A549 (cell line): ENCODE measurements at regions of chr1 and their contacts with region 1.

Region 1: GRCh38 chr1:171984850-171985485 is 143.7 kb downstream of the DNM3 start:
- DNase-seq: peak; percentile 24 to 32
- ATAC-seq: peak in 1 of 2 experiments; percentile 78; a peak in 3 of 6 replicates
- H3K4me3 ChIP-seq: no peak overlapping the region
- H3K27ac ChIP-seq: no peak overlapping the region
- H3K4me1 ChIP-seq: peaks cover 11% of the 10 kb centered on the region; the same call in 2 of the 3 replicates
- CTCF ChIP-seq: peak; percentile 89
- EP300 ChIP-seq: no peak
- POLR2A ChIP-seq: no peak
- RAD21 ChIP-seq: peak; percentile 82 to 84

Region 2: GRCh38 chr1:171644805-171645483 is 340.0 kb before region 1 on chr1:
- CTCF ChIA-PET with region 1: interaction called, 44 read pairs
- POLR2A ChIA-PET with region 1: no interaction called
- DNase-seq: peak; percentile 58 to 91
- ATAC-seq: peak; percentile 92 to 95
- H3K4me3 ChIP-seq: no peak overlapping the region
- H3K27ac ChIP-seq: peak overlapping the region in 1 of 2 experiments; percentile 55; a peak in 1 of 6 replicates
- H3K4me1 ChIP-seq: no peaks in the 10 kb centered on the region
- CTCF ChIP-seq: peak; percentile 79
- EP300 ChIP-seq: no peak
- POLR2A ChIP-seq: no peak
- RAD21 ChIP-seq: peak; percentile 76 to 83

Region 3: GRCh38 chr1:171801487-171801891 is 183.5 kb before region 1 on chr1:
- CTCF ChIA-PET with region 1: interaction called, 393 read pairs
- POLR2A ChIA-PET with region 1: interaction called, 4 read pairs
- DNase-seq: peak; percentile 50 to 54
- ATAC-seq: peak; percentile 75 to 77; a peak in 5 of 6 replicates
- H3K4me3 ChIP-seq: no peak overlapping the region
- H3K27ac ChIP-seq: no peak overlapping the region
- H3K4me1 ChIP-seq: no peaks in the 10 kb centered on the region
- CTCF ChIP-seq: peak; percentile 94
- EP300 ChIP-seq: no peak
- POLR2A ChIP-seq: no peak
- RAD21 ChIP-seq: peak; percentile 84 to 92

Region 4: GRCh38 chr1:171868217-171868803 is 116.7 kb before region 1 on chr1:
- CTCF ChIA-PET with region 1: no interaction called
- POLR2A ChIA-PET with region 1: no interaction called
- DNase-seq: no peak
- ATAC-seq: no peak
- H3K4me3 ChIP-seq: no peak overlapping the region
- H3K27ac ChIP-seq: no peak overlapping the region
- H3K4me1 ChIP-seq: no peaks in the 10 kb centered on the region
- CTCF ChIP-seq: no peak
- EP300 ChIP-seq: no peak
- POLR2A ChIP-seq: no peak
- RAD21 ChIP-seq: no peak

Region 5: DNA sequence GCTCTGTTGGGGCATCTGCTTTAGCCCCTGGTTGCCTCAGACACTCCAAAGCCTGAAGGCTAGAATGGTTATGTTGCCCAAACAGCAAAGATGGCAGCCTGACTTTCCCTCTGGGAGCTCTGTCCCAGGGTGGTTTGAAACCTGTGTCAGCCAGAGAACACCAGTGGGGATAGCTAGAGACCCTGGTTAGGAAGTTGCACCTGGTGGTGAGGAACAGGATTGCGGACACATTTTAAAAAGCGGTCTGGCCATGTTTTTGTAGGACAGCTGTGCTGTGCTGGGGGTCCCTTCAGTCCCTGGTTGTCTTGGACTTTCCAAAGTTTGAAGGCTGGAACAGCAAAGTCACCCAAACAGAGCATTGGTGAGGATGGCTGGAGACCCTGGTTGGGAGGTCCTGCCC is 55.8 kb before region 1 on chr1:
- CTCF ChIA-PET with region 1: no interaction called
- POLR2A ChIA-PET with region 1: no interaction called
- DNase-seq: no peak
- ATAC-seq: peak in 1 of 2 experiments; percentile 70; a peak in 3 of 6 replicates
- H3K4me3 ChIP-seq: no peak overlapping the region
- H3K27ac ChIP-seq: no peak overlapping the region
- H3K4me1 ChIP-seq: no peaks in the 10 kb centered on the region
- CTCF ChIP-seq: no peak
- EP300 ChIP-seq: no peak
- POLR2A ChIP-seq: no peak
- RAD21 ChIP-seq: no peak

Region 6: DNA sequence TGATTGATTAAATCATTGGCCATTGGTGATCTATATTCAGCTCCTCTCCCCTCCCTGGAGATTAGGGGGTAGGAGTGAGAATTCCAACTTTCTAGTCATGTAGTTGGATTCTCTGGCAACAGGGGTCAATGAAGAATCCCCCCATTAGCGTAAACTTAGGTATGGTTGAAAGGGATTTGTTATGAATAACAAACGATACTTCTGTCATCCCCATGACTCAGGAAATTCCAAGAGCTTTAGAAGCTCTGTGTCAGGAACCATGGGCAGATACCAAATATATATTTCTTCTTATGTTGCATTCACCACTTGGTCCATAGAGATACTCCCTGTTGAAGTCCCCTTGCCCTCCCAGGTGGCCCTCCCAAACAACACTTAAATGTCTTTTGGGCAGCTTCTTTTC is 19.2 kb before region 1 on chr1:
- CTCF ChIA-PET with region 1: interaction called, 32 read pairs
- POLR2A ChIA-PET with region 1: no interaction called
- DNase-seq: no peak
- ATAC-seq: no peak
- H3K4me3 ChIP-seq: no peak overlapping the region
- H3K27ac ChIP-seq: no peak overlapping the region
- H3K4me1 ChIP-seq: no peaks in the 10 kb centered on the region
- CTCF ChIP-seq: no peak
- EP300 ChIP-seq: no peak
- POLR2A ChIP-seq: no peak
- RAD21 ChIP-seq: no peak

Region 7: GRCh38 chr1:172002725-172003345 is 17.9 kb after region 1 on chr1:
- CTCF ChIA-PET with region 1: interaction called, 24 read pairs
- POLR2A ChIA-PET with region 1: no interaction called
- DNase-seq: peak; percentile 10 to 69
- ATAC-seq: peak; percentile 66 to 68; a peak in 3 of 6 replicates
- H3K4me3 ChIP-seq: no peak overlapping the region
- H3K27ac ChIP-seq: no peak overlapping the region
- H3K4me1 ChIP-seq: peaks cover 8% of the 10 kb centered on the region; the same call in 1 of the 3 replicates
- CTCF ChIP-seq: peak; percentile 95
- EP300 ChIP-seq: no peak
- POLR2A ChIP-seq: no peak
- RAD21 ChIP-seq: peak; percentile 93

Region 8: GRCh38 chr1:172398970-172399755 is 414.2 kb after region 1 on chr1:
- CTCF ChIA-PET with region 1: interaction called, 29 read pairs
- POLR2A ChIA-PET with region 1: interaction called, 5 read pairs
- DNase-seq: peak; percentile 78 to 90
- ATAC-seq: peak; percentile 90 to 95
- H3K4me3 ChIP-seq: no peak overlapping the region; the same call in 2 of the 3 replicates
- H3K27ac ChIP-seq: peak overlapping the region; percentile 83 to 86
- H3K4me1 ChIP-seq: peaks cover 28% of the 10 kb centered on the region
- CTCF ChIP-seq: peak; percentile 92
- EP300 ChIP-seq: peak; percentile 13 to 14; a peak in 1 of 5 replicates
- POLR2A ChIP-seq: no peak
- RAD21 ChIP-seq: peak; percentile 93 to 99

Region 9: GRCh38 chr1:172429331-172430127 is 444.6 kb after region 1 on chr1:
- CTCF ChIA-PET with region 1: interaction called, 32 read pairs
- POLR2A ChIA-PET with region 1: no interaction called
- DNase-seq: peak; percentile 65 to 82
- ATAC-seq: peak; percentile 74 to 89
- H3K4me3 ChIP-seq: no peak overlapping the region
- H3K27ac ChIP-seq: no peak overlapping the region
- H3K4me1 ChIP-seq: no peaks in the 10 kb centered on the region
- CTCF ChIP-seq: peak; percentile 99
- EP300 ChIP-seq: no peak
- POLR2A ChIP-seq: no peak
- RAD21 ChIP-seq: peak; percentile 95 to 96